ENCODE measurements at regions of chr18 and their contacts with region 1.

Region 1: GRCh38 chr18:812376-813171 is 532 bp upstream of the YES1 start:
- DNase-seq: peak; percentile 92
- H3K4me3 ChIP-seq: peak overlapping the region; percentile 99
- H3K27ac ChIP-seq: peak overlapping the region; percentile 89
- H3K4me1 ChIP-seq: peaks cover 12% of the 10 kb centered on the region
- H3K27me3 ChIP-seq: no peaks in the 10 kb centered on the region
- CTCF ChIP-seq: no peak

Region 2: GRCh38 chr18:596288-596881 is 216.2 kb before region 1 on chr18:
- CTCF ChIA-PET with region 1: no interaction called
- POLR2A ChIA-PET with region 1: no interaction called
- intact Hi-C with region 1: no loop called
- DNase-seq: no peak
- H3K4me3 ChIP-seq: no peak overlapping the region
- H3K27ac ChIP-seq: no peak overlapping the region
- H3K4me1 ChIP-seq: peaks cover 22% of the 10 kb centered on the region
- H3K27me3 ChIP-seq: no peaks in the 10 kb centered on the region
- CTCF ChIP-seq: no peak

Region 3: GRCh38 chr18:765764-766549 is 46.6 kb before region 1 on chr18:
- CTCF ChIA-PET with region 1: no interaction called
- POLR2A ChIA-PET with region 1: no interaction called
- intact Hi-C with region 1: loop called (anchors 5 kb)
- DNase-seq: no peak
- H3K4me3 ChIP-seq: no peak overlapping the region
- H3K27ac ChIP-seq: no peak overlapping the region
- H3K4me1 ChIP-seq: no peaks in the 10 kb centered on the region
- H3K27me3 ChIP-seq: no peaks in the 10 kb centered on the region
- CTCF ChIP-seq: no peak

Region 4: DNA sequence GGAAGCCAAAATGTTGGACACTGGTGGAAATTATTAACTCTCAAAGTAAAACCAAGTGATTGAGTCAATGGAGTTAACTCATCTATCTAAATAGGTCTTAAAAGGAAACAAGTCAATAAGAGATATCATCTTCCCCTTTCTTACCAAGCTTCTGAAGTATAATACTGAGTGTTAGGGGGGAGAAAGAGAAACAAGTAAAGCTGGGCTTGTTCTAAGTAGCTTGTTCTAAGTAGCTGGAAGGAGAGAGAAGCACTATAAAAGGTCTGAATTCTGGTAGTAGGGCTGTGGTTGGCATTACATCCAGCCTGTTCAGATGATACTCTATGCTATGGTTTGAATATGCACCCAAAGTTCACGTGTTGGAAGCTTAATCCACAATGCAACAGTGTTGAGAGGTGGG is 27.3 kb before region 1 on chr18:
- CTCF ChIA-PET with region 1: no interaction called
- POLR2A ChIA-PET with region 1: no interaction called
- intact Hi-C with region 1: no loop called
- DNase-seq: no peak
- H3K4me3 ChIP-seq: no peak overlapping the region
- H3K27ac ChIP-seq: no peak overlapping the region
- H3K4me1 ChIP-seq: peaks cover 9% of the 10 kb centered on the region
- H3K27me3 ChIP-seq: no peaks in the 10 kb centered on the region
- CTCF ChIP-seq: no peak

Region 5: DNA sequence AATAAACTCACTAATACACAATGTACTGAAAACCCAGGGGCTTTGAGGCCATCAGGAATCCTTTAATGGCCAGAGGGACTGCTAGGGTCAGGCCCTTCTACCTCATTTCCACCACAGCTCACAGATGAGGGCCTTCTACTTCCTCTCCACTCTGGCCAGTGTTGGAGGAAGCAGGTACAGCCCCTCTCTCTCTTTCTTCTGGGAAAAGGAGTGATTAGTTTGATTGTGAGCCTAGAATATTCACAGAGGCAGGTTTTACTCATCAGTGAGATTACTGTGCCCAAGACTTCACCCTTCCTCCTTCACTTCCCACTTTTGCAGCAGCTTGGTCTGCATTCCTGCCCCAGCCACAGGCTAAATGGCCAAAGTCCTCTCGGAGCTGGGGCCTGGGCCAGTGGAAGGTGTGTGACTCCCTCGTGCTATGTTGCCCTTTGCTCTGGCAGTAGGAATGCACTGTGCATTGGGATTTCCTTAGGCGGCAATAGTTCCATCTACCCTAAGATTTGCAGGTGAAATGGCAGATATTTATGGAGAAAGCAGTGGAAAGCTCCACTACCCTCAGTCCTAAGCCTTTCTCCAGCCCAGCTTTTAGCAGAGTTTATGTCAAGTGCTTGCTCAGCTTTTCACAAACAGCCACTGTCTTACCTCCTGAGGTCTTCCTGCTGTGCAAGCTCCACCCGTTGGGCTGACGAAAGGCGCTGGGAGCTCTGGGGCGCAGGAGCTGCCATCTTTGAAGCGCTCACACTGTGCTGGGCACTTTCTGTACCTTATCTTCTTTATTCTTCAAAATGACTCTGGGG is 35.7 kb after region 1 on chr18:
- CTCF ChIA-PET with region 1: no interaction called
- POLR2A ChIA-PET with region 1: no interaction called
- intact Hi-C with region 1: no loop called
- DNase-seq: no peak
- H3K4me3 ChIP-seq: no peak overlapping the region
- H3K27ac ChIP-seq: no peak overlapping the region
- H3K4me1 ChIP-seq: no peaks in the 10 kb centered on the region
- H3K27me3 ChIP-seq: no peaks in the 10 kb centered on the region
- CTCF ChIP-seq: no peak